PC-9 (cell line): ENCODE measurements at regions of chr3 and their contacts with region 1.

Region 1: DNA sequence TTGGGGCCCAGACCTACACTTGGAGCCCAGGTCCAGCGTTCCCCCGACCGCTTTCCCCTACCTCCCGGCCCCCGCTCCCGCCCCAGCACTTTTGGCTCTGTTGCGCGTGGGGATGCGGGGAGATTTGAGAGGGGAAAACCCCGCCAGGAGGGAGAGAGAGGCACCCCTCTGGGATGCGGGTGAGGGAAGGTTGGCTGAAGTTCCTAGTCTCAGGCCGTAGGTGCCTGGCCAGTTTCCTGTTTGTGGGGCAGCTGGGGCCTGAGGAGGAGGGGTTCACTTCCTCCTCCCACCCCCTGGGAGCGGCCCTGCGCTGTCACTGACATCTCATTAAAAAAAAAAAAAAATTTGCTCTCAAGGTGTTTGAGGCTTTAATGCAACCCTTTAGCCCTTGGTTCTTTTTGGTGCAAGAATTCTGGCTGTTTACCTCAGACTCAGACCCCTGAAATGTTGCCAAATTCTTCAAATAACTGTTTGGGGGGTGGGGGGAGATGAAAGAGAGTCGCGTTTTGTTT is 2.6 kb downstream of the FAM43A start:
- DNase-seq: peak in 1 of 2 experiments; percentile 66
- H3K4me3 ChIP-seq: peak overlapping the region; percentile 68
- H3K27ac ChIP-seq: peak overlapping the region; percentile 19; the same call in 1 of the 2 replicates
- H3K4me1 ChIP-seq: peaks cover 12% of the 10 kb centered on the region
- H3K27me3 ChIP-seq: no peaks in the 10 kb centered on the region
- CTCF ChIP-seq: no peak

Region 2: GRCh38 chr3:194808640-194809097 is 120.4 kb after region 1 on chr3:
- CTCF ChIA-PET with region 1: no interaction called
- POLR2A ChIA-PET with region 1: no interaction called
- intact Hi-C with region 1: no loop called
- DNase-seq: peak in 1 of 2 experiments; percentile 27
- H3K4me3 ChIP-seq: no peak overlapping the region
- H3K27ac ChIP-seq: no peak overlapping the region
- H3K4me1 ChIP-seq: 0 out of 2 replicates have a peak, but pooled peaks cover 5% of the 10 kb centered on the region
- H3K27me3 ChIP-seq: 0 out of 2 replicates have a peak, but pooled peaks cover 13% of the 10 kb centered on the region
- CTCF ChIP-seq: no peak

Region 3: DNA sequence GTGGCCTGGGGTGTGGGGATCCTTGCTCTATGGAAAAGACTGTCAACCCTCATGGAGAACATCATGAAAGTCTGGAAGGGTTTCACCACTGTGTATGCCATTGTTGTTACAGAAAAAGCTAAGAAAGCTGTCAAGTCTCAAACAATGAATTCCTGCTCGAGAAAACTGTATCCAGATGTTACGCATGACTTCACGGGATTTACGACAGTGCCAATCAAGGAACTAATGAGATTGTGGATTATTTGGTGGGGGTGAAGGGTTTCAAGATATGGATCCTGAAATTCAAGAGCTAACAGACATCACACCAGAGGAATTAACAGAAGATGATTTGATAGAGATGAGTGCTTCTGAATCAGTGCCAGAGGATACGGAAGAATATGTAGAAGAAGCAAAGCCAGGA is 847.0 kb after region 1 on chr3:
- CTCF ChIA-PET with region 1: no interaction called
- POLR2A ChIA-PET with region 1: interaction called, 17 read pairs
- intact Hi-C with region 1: no loop called
- DNase-seq: no peak
- H3K4me3 ChIP-seq: no peak overlapping the region
- H3K27ac ChIP-seq: no peak overlapping the region
- H3K4me1 ChIP-seq: no peaks in the 10 kb centered on the region
- H3K27me3 ChIP-seq: no peaks in the 10 kb centered on the region
- CTCF ChIP-seq: no peak